Aorta (tissue), 5 donors: ENCODE measurements at regions of chr11 and their contacts with region 1.

Region 1: DNA sequence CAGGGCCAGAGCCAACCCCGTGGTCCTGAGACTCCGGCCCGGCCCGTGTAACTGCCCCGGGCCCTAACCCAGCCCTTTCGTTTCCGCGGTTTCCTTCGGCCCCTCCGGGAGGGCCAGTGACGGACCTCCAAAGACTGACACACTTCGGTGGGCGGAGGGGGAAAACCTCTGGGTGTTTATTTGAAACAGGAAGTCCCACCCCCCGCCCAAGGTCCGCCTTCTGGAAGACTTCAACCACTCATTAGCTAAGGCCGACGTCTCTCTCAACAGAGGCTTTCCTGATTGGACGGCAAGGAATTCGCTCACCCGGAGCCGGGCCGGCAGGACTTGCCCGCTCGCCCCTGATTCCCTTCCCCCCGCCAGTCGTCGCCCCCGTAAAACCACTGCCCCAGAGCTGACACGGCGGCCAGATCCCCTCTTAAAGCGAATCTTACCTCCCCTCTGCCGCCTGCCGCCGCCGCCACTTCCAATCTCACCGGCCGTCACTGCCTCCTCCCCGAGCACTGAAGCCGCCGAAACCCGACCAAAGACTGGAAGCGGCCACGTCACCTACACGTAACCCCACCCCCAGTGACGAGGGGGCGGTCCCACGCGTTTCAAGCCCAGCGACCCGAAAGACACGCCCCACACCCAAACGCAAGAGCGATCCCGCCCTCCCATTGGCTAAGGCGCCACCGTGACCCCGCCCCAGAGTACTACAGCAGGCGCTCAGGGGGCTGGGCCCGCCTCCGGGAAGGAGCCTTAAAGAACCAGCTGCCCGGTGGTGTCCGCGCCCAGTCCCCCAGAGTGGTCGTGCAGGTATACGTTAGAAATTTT is at the start of gene STX5:
- DNase-seq: peak; percentile 100
- ATAC-seq: peak; percentile 99
- H3K4me3 ChIP-seq: peak within 1 kb of the TSS; percentile 69 to 71
- H3K27ac ChIP-seq: peak within 1 kb of the TSS; percentile 79 to 92
- H3K4me1 ChIP-seq: no peaks in the 10 kb centered on the region
- H3K27me3 ChIP-seq: no peaks in the 10 kb centered on the region
- total RNA-seq, gene STX5: 42.6 to 46.4 TPM

Region 2: GRCh38 chr11:62705880-62706849 is 125.6 kb before region 1 on chr11:
- intact Hi-C with region 1: loop called in 1 of 2 experiments (anchors 10 kb)
- DNase-seq: peak; percentile 97 to 99
- ATAC-seq: peak; percentile 95
- H3K4me3 ChIP-seq: peak overlapping the region; percentile 49 to 65
- H3K27ac ChIP-seq: peak overlapping the region in 1 of 2 donors; percentile 76
- H3K4me1 ChIP-seq: no peaks in the 10 kb centered on the region
- H3K27me3 ChIP-seq: no peaks in the 10 kb centered on the region

Region 3: GRCh38 chr11:62787005-62787759 is 44.5 kb before region 1 on chr11 and contains the start of gene TMEM179B:
- intact Hi-C with region 1: loop called in 1 of 2 experiments (anchors 5 kb)
- DNase-seq: peak; percentile 99
- ATAC-seq: peak; percentile 95
- H3K4me3 ChIP-seq: peak within 1 kb of the TSS; percentile 78 to 96
- H3K27ac ChIP-seq: peak within 1 kb of the TSS; percentile 72 to 85
- H3K4me1 ChIP-seq: no peaks in the 10 kb centered on the region
- H3K27me3 ChIP-seq: no peaks in the 10 kb centered on the region
- total RNA-seq, gene TMEM179B: 26.8 to 31.0 TPM

Region 4: DNA sequence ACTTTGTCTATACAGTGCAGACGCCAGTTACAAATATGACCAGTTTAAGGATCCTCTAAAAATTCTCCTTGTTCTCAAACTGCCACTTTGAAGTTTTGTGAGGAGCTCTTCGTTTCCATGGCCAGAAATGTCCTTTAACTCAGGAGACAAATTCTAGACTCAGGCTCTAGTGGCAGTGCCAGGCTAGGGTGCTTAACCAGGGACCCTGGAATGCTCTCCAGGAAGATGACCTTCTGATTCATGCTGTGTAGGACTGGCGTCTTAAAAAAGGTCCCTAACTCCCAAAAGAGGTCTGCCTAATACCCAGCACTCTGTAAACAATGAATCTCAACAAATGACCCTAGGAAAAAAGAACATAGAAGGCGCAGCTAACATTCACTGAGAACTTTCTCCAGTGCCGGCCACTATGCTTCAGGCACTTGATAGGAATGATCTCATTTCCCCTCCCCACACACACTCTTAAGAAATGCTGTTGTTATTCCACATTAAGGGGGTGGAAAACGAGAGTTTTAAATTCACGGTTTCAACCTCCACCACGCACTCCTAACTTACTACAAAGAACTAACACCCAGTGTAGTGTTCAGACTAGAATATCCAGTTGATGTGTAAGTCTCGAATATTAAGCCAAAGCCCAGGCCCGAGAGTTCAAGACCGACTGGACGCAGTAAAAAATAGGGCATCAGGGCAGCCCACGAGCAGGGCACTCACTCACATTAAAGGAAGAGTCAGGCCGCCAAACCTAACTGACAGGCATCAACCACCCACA is 27.2 kb before region 1 on chr11:
- intact Hi-C with region 1: loop called in 1 of 2 experiments (anchors 1 kb)
- DNase-seq: no peak
- ATAC-seq: no peak
- H3K4me3 ChIP-seq: peak overlapping the region; percentile 94 to 97
- H3K27ac ChIP-seq: peak overlapping the region in 1 of 2 donors; percentile 79
- H3K4me1 ChIP-seq: peaks cover 0 to 2% of the 10 kb centered on the region in 2 donors
- H3K27me3 ChIP-seq: peaks cover 0 to 1% of the 10 kb centered on the region in 2 donors